H1 (cell line): ENCODE measurements at regions of chr13 and their contacts with region 1.

Region 1: DNA sequence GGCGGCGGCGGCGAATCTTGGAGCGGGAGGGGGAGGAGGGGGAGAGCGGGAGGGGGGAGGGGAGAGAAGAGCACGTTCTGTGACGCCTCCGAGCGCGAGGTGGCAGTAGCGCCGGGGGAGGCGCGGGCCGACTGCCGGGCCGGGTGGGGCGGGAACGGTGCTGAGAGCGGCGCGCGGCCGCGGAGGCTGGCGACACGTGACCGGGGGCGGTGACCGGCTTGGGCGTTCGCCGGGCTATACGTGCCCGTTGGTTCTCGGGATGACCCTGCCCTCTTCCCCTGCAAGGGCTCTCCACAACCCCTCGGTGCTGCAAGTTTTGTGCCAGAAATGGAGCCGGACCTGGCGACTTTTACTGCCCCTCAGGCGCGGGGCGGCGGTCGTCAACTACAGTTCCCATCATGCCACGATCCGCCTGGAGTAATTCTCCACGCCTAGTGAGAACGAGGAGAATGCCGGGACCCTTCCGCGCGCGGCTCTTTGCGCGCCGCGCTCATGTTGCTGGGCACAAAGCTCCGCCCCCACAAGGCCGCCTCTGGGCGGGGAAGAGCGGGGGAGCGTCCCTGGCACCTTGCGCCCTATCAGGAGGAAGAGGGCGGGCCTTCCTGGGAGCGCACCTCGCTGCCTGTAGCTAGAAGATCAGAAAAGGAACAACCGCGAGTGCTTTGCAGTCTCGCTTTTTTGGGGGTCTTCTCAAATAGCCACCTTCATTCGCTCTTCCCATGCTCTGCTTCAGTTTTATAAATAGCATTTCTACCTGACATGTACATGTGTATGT is at the start of gene KPNA3:
- DNase-seq: peak; percentile 81 to 91
- H3K4me3 ChIP-seq: peak within 1 kb of the TSS; percentile 84 to 93 (median 91)
- H3K27ac ChIP-seq: peak within 1 kb of the TSS; percentile 95
- H3K4me1 ChIP-seq: peaks cover 3 to 8% (median 5%) of the 10 kb centered on the region in 4 experiments; a peak in 4 of 7 replicates
- H3K27me3 ChIP-seq: no peaks in the 10 kb centered on the region
- CTCF ChIP-seq: no peak; a peak in 2 of 4 replicates
- EP300 ChIP-seq: no peak
- POLR2A ChIP-seq: peak; percentile 59 to 94
- RAD21 ChIP-seq: no peak; a peak in 2 of 4 replicates
- total RNA-seq, gene KPNA3: 62.3 and 63.2 TPM in 2 replicates

Region 2: GRCh38 chr13:49669735-49670309 is 122.9 kb before region 1 on chr13:
- CTCF ChIA-PET with region 1: interaction called, 10 read pairs
- POLR2A ChIA-PET with region 1: interaction called, 22 read pairs
- DNase-seq: peak in 1 of 2 experiments; percentile 57
- H3K4me3 ChIP-seq: no peak overlapping the region
- H3K27ac ChIP-seq: no peak overlapping the region
- H3K4me1 ChIP-seq: peaks cover 0 to 8% (median 0%) of the 10 kb centered on the region in 4 experiments; a peak in 2 of 7 replicates
- H3K27me3 ChIP-seq: no peaks in the 10 kb centered on the region
- CTCF ChIP-seq: peak; percentile 75 to 88 (median 84)
- EP300 ChIP-seq: no peak
- POLR2A ChIP-seq: no peak
- RAD21 ChIP-seq: peak; percentile 92 to 97

Region 3: GRCh38 chr13:49690992-49691886 is 101.5 kb before region 1 on chr13 and contains the start of gene EBPL:
- CTCF ChIA-PET with region 1: no interaction called
- POLR2A ChIA-PET with region 1: interaction called, 30 read pairs
- DNase-seq: peak; percentile 79 to 99
- H3K4me3 ChIP-seq: peak within 1 kb of the TSS; percentile 57 to 84 (median 79)
- H3K27ac ChIP-seq: peak within 1 kb of the TSS; percentile 75; the same call in 1 of the 2 replicates
- H3K4me1 ChIP-seq: peaks cover 0 to 7% (median 2%) of the 10 kb centered on the region in 4 experiments; a peak in 2 of 7 replicates
- H3K27me3 ChIP-seq: no peaks in the 10 kb centered on the region
- CTCF ChIP-seq: no peak
- EP300 ChIP-seq: no peak
- POLR2A ChIP-seq: peak; percentile 90 to 96
- RAD21 ChIP-seq: no peak
- total RNA-seq, gene EBPL: 130 TPM in 2 replicates

Region 4: DNA sequence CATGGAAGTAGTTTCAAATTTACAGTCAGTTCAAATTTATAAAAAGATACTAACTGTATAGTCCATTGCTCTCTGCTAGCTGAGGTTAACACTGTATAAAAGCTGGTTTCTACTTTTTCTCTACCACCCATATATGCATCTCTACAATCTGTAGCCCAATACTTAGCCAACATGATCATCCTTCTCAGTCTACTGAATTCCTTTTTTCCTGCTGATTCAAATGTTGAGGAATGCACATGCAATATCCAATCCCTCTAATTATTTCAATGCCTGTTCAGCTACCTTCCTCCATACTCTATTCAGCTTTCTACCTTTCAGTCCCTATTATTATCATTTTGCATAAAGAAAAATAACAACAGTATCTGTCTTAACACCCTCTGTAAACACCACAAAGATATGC is 15.9 kb before region 1 on chr13:
- CTCF ChIA-PET with region 1: interaction called, 7 read pairs
- POLR2A ChIA-PET with region 1: interaction called, 21 read pairs
- DNase-seq: no peak
- H3K4me3 ChIP-seq: no peak overlapping the region
- H3K27ac ChIP-seq: no peak overlapping the region
- H3K4me1 ChIP-seq: no peaks in the 10 kb centered on the region
- H3K27me3 ChIP-seq: no peaks in the 10 kb centered on the region
- CTCF ChIP-seq: no peak
- EP300 ChIP-seq: no peak
- POLR2A ChIP-seq: no peak
- RAD21 ChIP-seq: no peak

Region 5: GRCh38 chr13:49810567-49811526 is 18.1 kb after region 1 on chr13:
- CTCF ChIA-PET with region 1: interaction called, 3 read pairs
- POLR2A ChIA-PET with region 1: interaction called, 15 read pairs
- DNase-seq: no peak
- H3K4me3 ChIP-seq: no peak overlapping the region
- H3K27ac ChIP-seq: no peak overlapping the region
- H3K4me1 ChIP-seq: no peaks in the 10 kb centered on the region
- H3K27me3 ChIP-seq: no peaks in the 10 kb centered on the region
- CTCF ChIP-seq: no peak
- EP300 ChIP-seq: no peak
- POLR2A ChIP-seq: no peak
- RAD21 ChIP-seq: no peak

Region 6: DNA sequence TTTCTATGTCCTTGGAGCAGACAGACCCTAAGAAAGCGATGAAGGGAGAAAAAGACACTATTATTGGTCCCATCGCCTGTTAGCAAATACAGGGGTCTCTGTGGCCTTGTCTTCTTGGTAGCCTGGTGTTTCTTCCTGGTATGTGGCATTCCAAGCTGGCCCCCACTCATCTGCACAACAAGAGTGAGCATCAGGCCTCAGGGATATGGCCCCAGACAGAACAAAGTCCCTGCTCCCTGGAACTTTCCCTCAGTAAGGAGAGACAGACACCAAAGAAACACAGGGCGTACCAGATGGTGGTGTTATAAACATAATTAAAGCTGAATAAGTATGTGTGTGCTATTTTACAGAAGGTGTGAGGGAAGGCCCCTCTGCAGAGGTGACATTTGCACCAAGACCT is 47.9 kb after region 1 on chr13:
- CTCF ChIA-PET with region 1: interaction called, 3 read pairs
- POLR2A ChIA-PET with region 1: interaction called, 12 read pairs
- DNase-seq: no peak
- H3K4me3 ChIP-seq: no peak overlapping the region
- H3K27ac ChIP-seq: no peak overlapping the region
- H3K4me1 ChIP-seq: peaks cover 0 to 6% (median 0%) of the 10 kb centered on the region in 4 experiments; a peak in 2 of 7 replicates
- H3K27me3 ChIP-seq: no peaks in the 10 kb centered on the region
- CTCF ChIP-seq: no peak
- EP300 ChIP-seq: no peak
- POLR2A ChIP-seq: no peak
- RAD21 ChIP-seq: no peak